MCF 10A (cell line): ENCODE measurements at regions of chr1 and their contacts with region 1.

Region 1: GRCh38 chr1:228165372-228166169 is at the start of gene IBA57:
- DNase-seq: peak; percentile 100
- H3K4me3 Mint-ChIP-seq: peak within 1 kb of the TSS; percentile 70
- H3K27ac Mint-ChIP-seq: peak within 1 kb of the TSS; percentile 86
- H3K4me1 Mint-ChIP-seq: peaks cover 46% of the 10 kb centered on the region
- H3K27me3 Mint-ChIP-seq: no peaks in the 10 kb centered on the region
- CTCF ChIP-seq: peak; percentile 99
- total RNA-seq, gene IBA57: 12.0 and 16.5 TPM in 2 replicates

Region 2: GRCh38 chr1:228109073-228109961 is 56.3 kb before region 1 on chr1 and contains the start of gene MRPL55:
- CTCF ChIA-PET with region 1: interaction called, 7 read pairs
- POLR2A ChIA-PET with region 1: interaction called, 42 read pairs
- intact Hi-C with region 1: loop called (anchors 2 kb)
- DNase-seq: peak; percentile 99
- H3K4me3 Mint-ChIP-seq: peak within 1 kb of the TSS; percentile 95
- H3K27ac Mint-ChIP-seq: peak within 1 kb of the TSS; percentile 92
- H3K4me1 Mint-ChIP-seq: peaks cover 12% of the 10 kb centered on the region
- H3K27me3 Mint-ChIP-seq: no peaks in the 10 kb centered on the region
- CTCF ChIP-seq: no peak
- total RNA-seq, gene MRPL55: 85.4 and 111 TPM in 2 replicates

Region 3: GRCh38 chr1:228120857-228121489 is 44.6 kb before region 1 on chr1:
- CTCF ChIA-PET with region 1: interaction called, 15 read pairs
- POLR2A ChIA-PET with region 1: interaction called, 6 read pairs
- intact Hi-C with region 1: no loop called
- DNase-seq: no peak
- H3K4me3 Mint-ChIP-seq: no peak overlapping the region
- H3K27ac Mint-ChIP-seq: no peak overlapping the region
- H3K4me1 Mint-ChIP-seq: no peaks in the 10 kb centered on the region
- H3K27me3 Mint-ChIP-seq: no peaks in the 10 kb centered on the region
- CTCF ChIP-seq: no peak

Region 4: DNA sequence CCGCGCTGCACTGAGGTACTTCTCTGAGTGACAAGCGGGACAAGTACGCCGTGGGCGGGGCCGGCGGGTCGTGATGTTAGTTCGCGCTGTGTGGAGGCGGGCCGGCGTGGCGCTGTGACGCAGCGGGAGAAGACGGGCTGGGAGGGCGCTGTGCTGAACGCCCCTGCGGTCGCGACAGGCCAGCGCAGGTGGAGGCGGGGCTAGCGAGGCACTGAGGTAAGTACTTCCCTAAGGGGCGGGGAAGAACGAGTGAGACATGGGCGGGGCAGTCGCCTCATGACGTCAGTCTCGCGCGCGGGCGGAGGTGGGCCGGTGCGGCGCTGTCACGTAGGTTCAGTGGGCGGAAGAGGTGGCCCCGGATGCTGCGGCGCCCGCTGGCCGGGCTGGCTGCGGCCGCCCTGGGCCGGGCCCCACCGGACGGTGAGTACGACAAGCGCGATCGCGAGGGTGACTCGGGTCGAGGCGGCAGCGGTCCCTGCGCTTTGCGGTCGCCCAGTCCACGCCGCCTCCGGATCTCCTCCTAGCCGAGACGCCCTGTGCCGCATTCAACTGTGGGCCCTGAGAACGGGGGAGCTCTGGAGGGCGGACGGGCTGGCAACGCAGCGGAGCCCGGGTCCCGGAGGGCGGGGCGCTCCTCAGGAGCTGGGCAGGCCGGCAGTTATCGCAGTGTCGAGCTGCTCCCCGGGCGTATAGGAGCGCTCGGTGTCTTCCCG is 25.5 kb before region 1 on chr1 and contains the start of gene GUK1:
- CTCF ChIA-PET with region 1: interaction called, 72 read pairs
- POLR2A ChIA-PET with region 1: interaction called, 318 read pairs
- intact Hi-C with region 1: loop called (anchors 1 kb)
- DNase-seq: peak; percentile 100
- H3K4me3 Mint-ChIP-seq: peak within 1 kb of the TSS; percentile 99
- H3K27ac Mint-ChIP-seq: peak within 1 kb of the TSS; percentile 95
- H3K4me1 Mint-ChIP-seq: peaks cover 25% of the 10 kb centered on the region
- H3K27me3 Mint-ChIP-seq: peaks cover 29% of the 10 kb centered on the region
- CTCF ChIP-seq: peak; percentile 32
- total RNA-seq, gene GUK1: 495 and 510 TPM in 2 replicates

Region 5: DNA sequence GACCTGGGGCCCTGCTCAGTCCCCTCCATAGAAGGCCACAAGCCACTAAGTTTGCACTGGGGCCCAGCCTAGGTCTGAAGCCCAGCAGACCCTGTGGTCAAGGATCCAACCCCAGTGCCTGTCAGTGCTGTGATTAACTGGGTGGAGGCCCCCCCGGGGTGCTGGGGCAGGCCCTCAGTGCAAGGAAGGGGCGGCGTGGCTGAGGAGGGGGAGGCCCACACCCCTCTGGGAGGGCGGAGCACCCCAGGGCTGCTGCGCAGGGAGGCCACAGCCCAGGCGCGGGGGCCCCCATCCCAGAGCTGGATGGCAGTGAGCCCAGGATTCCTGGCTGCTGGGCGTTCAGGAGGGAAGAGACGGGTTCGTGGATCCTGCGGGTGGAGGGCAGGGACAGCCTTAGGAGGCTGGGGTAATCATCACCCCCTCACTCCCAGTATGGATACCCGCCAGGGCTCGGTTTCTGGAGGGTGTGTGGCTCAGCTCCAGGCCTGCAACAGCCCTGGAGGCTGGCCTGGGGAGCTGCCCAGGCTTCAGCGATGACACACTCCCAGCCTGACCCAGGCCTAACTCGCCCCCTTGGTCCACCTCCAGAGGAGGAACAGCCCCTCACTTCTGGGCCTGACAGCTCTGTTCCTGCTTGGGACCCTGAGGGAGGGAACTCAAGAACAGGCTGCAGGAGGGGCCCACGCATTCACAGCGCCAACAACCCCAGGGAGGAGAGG is 15.0 kb before region 1 on chr1:
- CTCF ChIA-PET with region 1: interaction called, 72 read pairs
- POLR2A ChIA-PET with region 1: interaction called, 318 read pairs
- intact Hi-C with region 1: loop called (anchors 1 kb)
- DNase-seq: peak; percentile 67
- H3K4me3 Mint-ChIP-seq: peak overlapping the region; percentile 44
- H3K27ac Mint-ChIP-seq: peak overlapping the region; percentile 83
- H3K4me1 Mint-ChIP-seq: peaks cover 47% of the 10 kb centered on the region
- H3K27me3 Mint-ChIP-seq: no peaks in the 10 kb centered on the region
- CTCF ChIP-seq: no peak

Region 6: GRCh38 chr1:228226956-228227791 is 61.6 kb after region 1 on chr1:
- CTCF ChIA-PET with region 1: interaction called, 3 read pairs
- POLR2A ChIA-PET with region 1: interaction called, 11 read pairs
- intact Hi-C with region 1: loop called (anchors 2 kb)
- DNase-seq: peak; percentile 42
- H3K4me3 Mint-ChIP-seq: no peak overlapping the region
- H3K27ac Mint-ChIP-seq: peak overlapping the region; percentile 93
- H3K4me1 Mint-ChIP-seq: peaks cover 15% of the 10 kb centered on the region
- H3K27me3 Mint-ChIP-seq: no peaks in the 10 kb centered on the region
- CTCF ChIP-seq: peak; percentile 31

Region 7: DNA sequence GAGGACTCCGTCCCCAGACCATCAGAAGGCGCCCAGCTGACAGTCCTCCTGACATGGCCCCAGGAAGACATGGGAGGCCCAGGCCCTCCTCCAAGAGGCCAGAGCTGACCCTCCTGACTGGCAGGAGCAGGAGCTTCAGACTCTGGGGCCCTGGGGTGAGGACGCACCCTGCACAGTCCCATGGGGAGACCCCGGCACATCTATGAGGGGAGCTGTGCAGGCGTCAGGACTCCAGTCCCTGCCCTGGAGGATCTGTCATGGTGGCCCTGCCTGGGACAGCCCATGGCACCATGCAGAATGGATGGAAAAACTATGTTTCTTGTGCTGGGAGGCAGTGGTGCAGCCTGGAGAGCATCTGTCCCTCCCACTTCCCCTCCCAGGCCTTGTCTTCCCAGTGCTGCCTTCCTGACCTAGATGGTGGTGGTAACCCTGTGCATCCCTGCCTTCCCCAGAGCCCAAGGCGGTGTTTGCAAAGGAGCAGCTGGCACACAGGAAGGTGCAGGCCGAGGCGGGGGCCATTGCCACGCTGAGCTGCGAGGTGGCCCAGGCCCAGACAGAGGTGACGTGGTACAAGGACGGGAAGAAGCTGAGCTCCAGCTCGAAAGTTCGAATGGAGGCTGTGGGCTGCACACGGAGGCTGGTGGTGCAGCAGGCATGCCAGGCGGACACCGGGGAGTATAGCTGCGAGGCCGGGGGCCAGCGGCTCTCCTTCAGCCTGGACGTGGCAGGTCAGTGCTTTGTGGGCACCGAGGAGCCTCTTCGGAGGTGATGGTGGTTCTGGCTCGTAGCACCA is 84.1 kb after region 1 on chr1:
- CTCF ChIA-PET with region 1: no interaction called
- POLR2A ChIA-PET with region 1: no interaction called
- intact Hi-C with region 1: no loop called
- DNase-seq: no peak
- H3K4me3 Mint-ChIP-seq: no peak overlapping the region
- H3K27ac Mint-ChIP-seq: no peak overlapping the region
- H3K4me1 Mint-ChIP-seq: no peaks in the 10 kb centered on the region
- H3K27me3 Mint-ChIP-seq: no peaks in the 10 kb centered on the region
- CTCF ChIP-seq: no peak

Region 8: GRCh38 chr1:228486596-228487335 is 321.2 kb after region 1 on chr1:
- CTCF ChIA-PET with region 1: interaction called, 6 read pairs
- POLR2A ChIA-PET with region 1: interaction called, 15 read pairs
- intact Hi-C with region 1: no loop called
- DNase-seq: peak; percentile 93
- H3K4me3 Mint-ChIP-seq: peak overlapping the region; percentile 90
- H3K27ac Mint-ChIP-seq: peak overlapping the region; percentile 100
- H3K4me1 Mint-ChIP-seq: peaks cover 40% of the 10 kb centered on the region
- H3K27me3 Mint-ChIP-seq: peaks cover 14% of the 10 kb centered on the region
- CTCF ChIP-seq: no peak